Activated naive CD4-positive, alpha-beta T cell treated with anti-CD3 and anti-CD28 coated beads for 36 hours (primary cell): ENCODE measurements at regions of chr3 and their contacts with region 1.

Region 1: DNA sequence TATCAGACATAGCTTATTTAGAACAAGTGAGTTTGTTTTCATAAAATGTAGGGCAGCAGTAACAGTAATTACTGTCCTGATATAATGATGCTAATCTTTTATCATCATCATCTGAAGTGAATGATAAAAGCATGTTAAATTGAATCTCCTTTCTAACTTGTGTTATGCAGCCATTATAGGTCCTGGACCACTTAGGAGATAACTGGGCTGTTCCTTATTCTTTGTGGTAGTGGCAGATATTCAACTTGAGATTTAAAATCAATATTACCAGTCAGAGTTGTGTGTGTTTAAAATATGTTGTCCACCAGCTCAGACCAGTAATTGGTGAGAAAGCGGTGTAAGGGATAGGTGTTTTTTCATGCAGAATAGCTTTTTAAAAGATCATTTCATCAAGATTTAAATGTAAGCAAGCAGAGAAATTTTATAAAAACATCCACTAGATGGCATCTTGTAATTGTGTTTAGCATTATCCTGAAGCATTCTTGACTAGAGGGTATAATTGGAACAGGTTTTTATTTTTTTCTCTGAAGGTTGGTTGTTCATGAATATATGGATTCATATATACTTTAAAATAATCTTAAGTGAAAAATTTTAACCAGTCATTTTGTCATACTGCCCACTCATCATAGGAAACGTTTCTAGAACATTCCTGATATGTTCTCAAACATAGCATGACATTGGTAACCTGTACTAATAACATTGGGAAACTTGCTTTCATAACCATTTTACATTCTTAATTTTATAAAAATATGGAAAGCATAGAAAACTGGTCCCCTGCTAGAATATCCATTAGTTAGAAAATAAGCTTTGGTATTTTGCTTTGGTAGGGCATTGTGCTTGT is 153.9 kb downstream of the BBX start:
- DNase-seq: no peak
- H3K4me3 Mint-ChIP-seq: no peak overlapping the region
- H3K27ac Mint-ChIP-seq: no peak overlapping the region
- H3K4me1 Mint-ChIP-seq: peaks cover 32% of the 10 kb centered on the region
- H3K27me3 Mint-ChIP-seq: no peaks in the 10 kb centered on the region

Region 2: GRCh38 chr3:107660306-107660976 is 16.2 kb before region 1 on chr3:
- CTCF ChIA-PET with region 1: interaction called, 74 read pairs
- intact Hi-C with region 1: no loop called
- DNase-seq: no peak
- H3K4me3 Mint-ChIP-seq: no peak overlapping the region
- H3K27ac Mint-ChIP-seq: no peak overlapping the region
- H3K4me1 Mint-ChIP-seq: peaks cover 21% of the 10 kb centered on the region
- H3K27me3 Mint-ChIP-seq: no peaks in the 10 kb centered on the region

Region 3: DNA sequence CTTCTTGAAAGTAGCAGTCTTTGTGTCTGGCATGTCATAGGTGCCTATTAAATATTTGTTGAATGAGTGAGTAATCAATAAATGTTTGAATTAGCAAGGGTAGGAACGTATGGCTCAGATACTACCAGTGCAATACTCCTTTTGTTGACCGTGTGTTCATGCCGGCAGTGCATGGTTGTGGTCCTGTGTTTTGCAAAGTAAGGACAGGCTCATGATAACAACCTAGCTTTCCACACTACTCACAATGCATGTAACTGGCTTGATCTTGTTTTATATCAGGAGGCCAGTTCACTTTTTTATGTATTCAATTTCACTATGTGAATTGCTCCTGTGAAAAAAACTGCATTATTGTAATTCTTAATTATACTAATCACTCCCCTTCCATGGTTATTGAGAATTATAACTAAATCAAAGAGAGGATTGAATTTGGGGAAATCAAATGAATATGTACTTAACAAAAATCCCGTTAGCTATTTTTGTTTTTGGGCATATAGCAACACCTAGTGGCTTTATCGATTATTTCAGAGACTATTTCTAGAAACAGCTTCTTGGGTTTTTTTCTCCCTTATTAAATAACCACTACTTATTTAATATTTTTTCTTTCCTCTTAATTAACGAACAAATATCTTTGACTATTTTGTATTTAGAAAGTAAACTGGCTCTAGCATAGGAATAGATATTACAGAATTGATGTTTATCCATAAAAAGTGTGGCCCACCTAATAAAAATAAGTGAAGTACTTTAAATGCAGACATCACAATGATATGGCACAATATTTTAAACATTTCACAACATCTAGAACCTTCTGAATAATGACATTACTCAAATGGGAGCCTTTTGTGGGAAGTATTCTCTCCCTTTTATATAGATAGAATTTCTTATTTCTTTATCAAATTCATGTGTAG is 64.6 kb after region 1 on chr3:
- CTCF ChIA-PET with region 1: interaction called, 71 read pairs
- intact Hi-C with region 1: loop called (anchors 1 kb)
- DNase-seq: no peak
- H3K4me3 Mint-ChIP-seq: no peak overlapping the region
- H3K27ac Mint-ChIP-seq: no peak overlapping the region
- H3K4me1 Mint-ChIP-seq: no peaks in the 10 kb centered on the region
- H3K27me3 Mint-ChIP-seq: no peaks in the 10 kb centered on the region

Region 4: DNA sequence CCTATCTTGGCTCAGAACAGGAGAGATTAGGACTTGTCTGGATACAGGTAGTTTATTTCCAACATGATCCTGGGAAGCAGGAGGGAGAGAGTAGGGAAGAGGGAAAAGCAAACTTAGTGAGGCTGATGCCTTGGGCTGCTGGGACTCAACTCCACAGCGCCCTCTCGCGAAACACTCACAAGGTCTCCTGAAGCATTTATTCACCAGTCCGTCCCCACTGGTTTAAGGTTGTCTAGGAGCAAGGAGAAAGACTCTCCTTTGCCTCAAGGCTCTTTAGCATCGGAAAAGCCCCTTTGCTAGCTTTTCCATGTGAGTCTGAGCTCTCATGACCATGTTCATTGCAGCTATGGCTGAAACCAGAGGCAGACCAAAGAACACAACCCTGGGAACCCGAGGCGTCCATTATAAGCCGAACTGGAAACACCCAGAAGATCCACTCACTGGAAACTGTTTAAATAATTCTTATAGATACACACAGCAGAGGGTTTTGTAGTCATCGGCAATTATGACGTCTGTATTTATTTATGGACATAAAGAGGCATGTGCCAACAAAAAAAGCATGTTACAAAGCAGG is 169.7 kb after region 1 on chr3:
- CTCF ChIA-PET with region 1: interaction called, 5 read pairs
- intact Hi-C with region 1: loop called (anchors 1 kb)
- DNase-seq: peak; percentile 65
- H3K4me3 Mint-ChIP-seq: no peak overlapping the region
- H3K27ac Mint-ChIP-seq: no peak overlapping the region
- H3K4me1 Mint-ChIP-seq: no peaks in the 10 kb centered on the region
- H3K27me3 Mint-ChIP-seq: no peaks in the 10 kb centered on the region

Region 5: DNA sequence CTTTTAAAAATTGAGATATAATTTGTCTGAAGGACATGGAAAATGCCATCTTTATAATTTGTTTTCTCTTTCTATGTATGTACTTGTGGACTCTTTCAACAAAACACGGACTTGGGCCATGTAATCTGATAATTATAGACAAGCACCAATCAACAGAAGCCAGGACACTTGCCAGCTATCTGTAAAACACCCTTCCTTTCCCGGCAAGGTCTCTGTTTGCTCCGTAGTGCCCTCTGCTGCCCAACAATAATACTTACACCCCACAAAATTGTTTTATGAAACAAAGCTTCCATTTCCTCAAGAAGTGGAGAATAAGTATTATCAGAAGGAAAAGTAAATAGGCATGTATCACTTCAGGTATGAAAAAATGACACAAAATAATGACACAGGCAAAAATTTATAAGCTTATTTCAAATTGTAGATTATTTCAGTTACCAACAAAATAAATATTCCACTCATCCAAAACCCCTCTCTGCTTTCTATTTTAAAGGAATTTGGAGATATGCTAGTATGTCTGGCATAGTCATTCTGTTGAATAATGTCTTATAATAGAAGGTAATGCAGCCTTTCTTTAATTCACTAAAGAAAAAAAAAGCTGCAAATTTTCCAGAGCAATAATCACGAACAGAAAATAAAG is 800.9 kb after region 1 on chr3:
- CTCF ChIA-PET with region 1: no interaction called
- intact Hi-C with region 1: loop called (anchors 5 kb)
- DNase-seq: peak; percentile 75
- H3K4me3 Mint-ChIP-seq: no peak overlapping the region
- H3K27ac Mint-ChIP-seq: no peak overlapping the region
- H3K4me1 Mint-ChIP-seq: no peaks in the 10 kb centered on the region
- H3K27me3 Mint-ChIP-seq: no peaks in the 10 kb centered on the region